Activated CD8-positive, alpha-beta T cell treated with anti-CD3 and anti-CD28 coated beads, Interleukin-2, amount 10 ng/mL, durations not matched to agents 7 days and 5 days (primary cell): ENCODE measurements at regions of chr2 and their contacts with region 1.

Region 1: DNA sequence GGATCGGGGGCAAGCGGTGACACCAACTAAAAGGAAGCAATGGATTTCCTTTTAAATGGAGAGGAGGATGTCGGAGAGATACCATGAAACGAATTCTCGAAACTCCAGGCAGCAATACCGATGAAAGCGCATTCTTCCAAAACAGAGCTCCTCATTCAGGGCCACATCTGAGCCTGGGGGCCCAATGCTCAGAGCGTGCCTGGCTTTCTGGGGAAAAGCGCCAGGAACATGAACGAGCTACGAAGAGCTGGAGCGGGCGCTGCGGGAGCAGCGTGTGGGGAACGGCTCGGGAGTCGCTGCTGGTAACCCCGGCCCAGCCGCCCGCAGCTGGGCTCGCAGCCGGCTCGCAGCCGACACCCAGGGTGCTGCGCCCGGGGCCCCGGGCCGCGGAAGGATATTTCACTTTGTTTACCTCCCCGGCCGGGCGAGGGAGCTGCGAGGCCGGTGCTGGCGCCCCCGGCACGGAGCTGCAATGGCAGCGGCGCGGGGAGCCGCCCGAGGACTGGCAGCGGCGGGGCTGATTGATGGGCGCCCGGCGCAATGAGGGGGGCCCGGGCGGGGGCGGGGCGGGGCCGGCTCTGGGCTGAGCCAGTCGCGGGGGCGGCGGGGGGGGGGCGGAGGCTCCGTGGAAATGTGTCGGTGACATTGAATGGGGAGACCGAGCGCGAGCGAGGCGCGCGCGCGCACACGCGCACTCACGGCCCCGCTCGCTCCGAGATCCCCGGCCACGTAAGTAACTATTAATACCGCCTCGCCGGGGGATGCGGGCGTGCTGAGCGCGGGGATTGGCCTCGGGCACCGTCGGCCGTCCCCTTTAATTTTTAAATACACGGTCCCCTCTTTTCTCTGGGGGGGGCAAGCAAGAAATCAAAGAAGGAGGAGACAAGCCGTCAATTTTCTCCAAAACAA is at the start of gene TRIB2:
- DNase-seq: peak; percentile 92
- ATAC-seq: peak; percentile 89
- H3K4me3 Mint-ChIP-seq: peak within 1 kb of the TSS; percentile 99
- H3K27ac Mint-ChIP-seq: peak within 1 kb of the TSS; percentile 97
- H3K4me1 Mint-ChIP-seq: peaks cover 49% of the 10 kb centered on the region
- H3K27me3 Mint-ChIP-seq: peaks cover 4% of the 10 kb centered on the region
- total RNA-seq, gene TRIB2: 52.7 to 57.7 TPM

Region 2: GRCh38 chr2:11829947-11830707 is 886.4 kb before region 1 on chr2:
- CTCF ChIA-PET with region 1: interaction called, 32 read pairs
- POLR2A ChIA-PET with region 1: no interaction called
- DNase-seq: peak; percentile 72
- ATAC-seq: peak; percentile 82
- H3K4me3 Mint-ChIP-seq: peak overlapping the region; percentile 69
- H3K27ac Mint-ChIP-seq: peak overlapping the region; percentile 91
- H3K4me1 Mint-ChIP-seq: peaks cover 65% of the 10 kb centered on the region
- H3K27me3 Mint-ChIP-seq: peaks cover 13% of the 10 kb centered on the region

Region 3: GRCh38 chr2:12293874-12294273 is 422.7 kb before region 1 on chr2:
- CTCF ChIA-PET with region 1: interaction called, 16 read pairs
- POLR2A ChIA-PET with region 1: interaction called, 13 read pairs
- DNase-seq: peak; percentile 42
- ATAC-seq: peak; percentile 97
- H3K4me3 Mint-ChIP-seq: peak overlapping the region; percentile 0
- H3K27ac Mint-ChIP-seq: peak overlapping the region; percentile 92
- H3K4me1 Mint-ChIP-seq: peaks cover 60% of the 10 kb centered on the region
- H3K27me3 Mint-ChIP-seq: no peaks in the 10 kb centered on the region

Region 4: GRCh38 chr2:12452211-12452610 is 264.3 kb before region 1 on chr2:
- CTCF ChIA-PET with region 1: interaction called, 12 read pairs
- POLR2A ChIA-PET with region 1: interaction called, 3 read pairs
- DNase-seq: no peak
- ATAC-seq: no peak
- H3K4me3 Mint-ChIP-seq: peak overlapping the region; percentile 65
- H3K27ac Mint-ChIP-seq: peak overlapping the region; percentile 82
- H3K4me1 Mint-ChIP-seq: peaks cover 35% of the 10 kb centered on the region
- H3K27me3 Mint-ChIP-seq: no peaks in the 10 kb centered on the region

Region 5: GRCh38 chr2:12555012-12555645 is 161.4 kb before region 1 on chr2:
- CTCF ChIA-PET with region 1: interaction called, 23 read pairs
- POLR2A ChIA-PET with region 1: no interaction called
- DNase-seq: no peak
- ATAC-seq: no peak
- H3K4me3 Mint-ChIP-seq: no peak overlapping the region
- H3K27ac Mint-ChIP-seq: no peak overlapping the region
- H3K4me1 Mint-ChIP-seq: peaks cover 26% of the 10 kb centered on the region
- H3K27me3 Mint-ChIP-seq: no peaks in the 10 kb centered on the region

Region 6: GRCh38 chr2:12931186-12931844 is 214.8 kb after region 1 on chr2:
- CTCF ChIA-PET with region 1: interaction called, 27 read pairs
- POLR2A ChIA-PET with region 1: interaction called, 3 read pairs
- DNase-seq: peak; percentile 23
- ATAC-seq: peak; percentile 51
- H3K4me3 Mint-ChIP-seq: no peak overlapping the region
- H3K27ac Mint-ChIP-seq: no peak overlapping the region
- H3K4me1 Mint-ChIP-seq: peaks cover 8% of the 10 kb centered on the region
- H3K27me3 Mint-ChIP-seq: peaks cover 28% of the 10 kb centered on the region